ENCODE measurements at regions of chr6 and their contacts with region 1.

Region 1: GRCh38 chr6:7154341-7155139 is 46.8 kb downstream of the RREB1 start:
- DNase-seq: no peak
- ATAC-seq: peak; percentile 84
- H3K4me3 Mint-ChIP-seq: peak overlapping the region; percentile 74
- H3K27ac Mint-ChIP-seq: peak overlapping the region; percentile 92
- H3K4me1 Mint-ChIP-seq: peaks cover 89% of the 10 kb centered on the region
- H3K27me3 Mint-ChIP-seq: no peaks in the 10 kb centered on the region
- CTCF ChIP-seq: no peak

Region 2: GRCh38 chr6:6940031-6941025 is 214.2 kb before region 1 on chr6:
- CTCF ChIA-PET with region 1: no interaction called
- POLR2A ChIA-PET with region 1: interaction called, 14 read pairs
- intact Hi-C with region 1: no loop called
- DNase-seq: no peak
- ATAC-seq: no peak
- H3K4me3 Mint-ChIP-seq: no peak overlapping the region
- H3K27ac Mint-ChIP-seq: no peak overlapping the region
- H3K4me1 Mint-ChIP-seq: peaks cover 7% of the 10 kb centered on the region
- H3K27me3 Mint-ChIP-seq: peaks cover 3% of the 10 kb centered on the region
- CTCF ChIP-seq: no peak

Region 3: GRCh38 chr6:7140631-7141378 is 13.7 kb before region 1 on chr6:
- CTCF ChIA-PET with region 1: no interaction called
- POLR2A ChIA-PET with region 1: interaction called, 17 read pairs
- intact Hi-C with region 1: loop called (anchors 1 kb)
- DNase-seq: peak; percentile 78
- ATAC-seq: peak; percentile 82
- H3K4me3 Mint-ChIP-seq: peak overlapping the region; percentile 85
- H3K27ac Mint-ChIP-seq: peak overlapping the region; percentile 89
- H3K4me1 Mint-ChIP-seq: peaks cover 77% of the 10 kb centered on the region
- H3K27me3 Mint-ChIP-seq: no peaks in the 10 kb centered on the region
- CTCF ChIP-seq: no peak

Region 4: DNA sequence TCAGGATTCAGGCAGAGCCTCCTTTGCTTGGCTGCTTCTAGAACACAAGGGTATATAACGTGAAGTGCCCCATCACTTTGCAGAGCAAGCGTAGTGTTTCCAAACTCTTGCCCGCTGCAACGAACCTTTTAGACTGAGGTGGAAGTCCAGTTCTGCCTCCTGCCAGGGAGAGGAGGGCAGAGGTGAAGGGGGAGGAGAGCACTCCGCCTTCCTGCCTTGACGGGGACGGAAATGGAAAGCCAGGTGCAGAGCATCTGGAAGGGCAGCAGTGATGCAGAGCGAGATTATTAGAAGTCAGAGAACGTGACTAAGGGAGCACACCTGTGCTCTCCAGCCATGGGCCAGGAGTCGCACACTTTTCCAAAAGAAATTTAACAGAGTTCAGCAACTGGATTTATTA is 16.6 kb after region 1 on chr6:
- CTCF ChIA-PET with region 1: no interaction called
- POLR2A ChIA-PET with region 1: interaction called, 4 read pairs
- intact Hi-C with region 1: loop called (anchors 2 kb)
- DNase-seq: no peak
- ATAC-seq: no peak
- H3K4me3 Mint-ChIP-seq: no peak overlapping the region
- H3K27ac Mint-ChIP-seq: no peak overlapping the region
- H3K4me1 Mint-ChIP-seq: peaks cover 53% of the 10 kb centered on the region
- H3K27me3 Mint-ChIP-seq: no peaks in the 10 kb centered on the region
- CTCF ChIP-seq: no peak

Region 5: GRCh38 chr6:7188492-7188891 is 34.0 kb after region 1 on chr6:
- CTCF ChIA-PET with region 1: no interaction called
- POLR2A ChIA-PET with region 1: no interaction called
- intact Hi-C with region 1: loop called (anchors 2 kb)
- DNase-seq: no peak
- ATAC-seq: peak; percentile 97
- H3K4me3 Mint-ChIP-seq: peak overlapping the region; percentile 45
- H3K27ac Mint-ChIP-seq: peak overlapping the region; percentile 72
- H3K4me1 Mint-ChIP-seq: peaks cover 21% of the 10 kb centered on the region
- H3K27me3 Mint-ChIP-seq: no peaks in the 10 kb centered on the region
- CTCF ChIP-seq: no peak